Activated CD4-positive, alpha-beta memory T cell treated with anti-CD3 and anti-CD28 coated beads, Interleukin-2, amount 10 ng/mL, durations not matched to agents 7 days and 5 days (primary cell): ENCODE measurements at regions of chr4 and their contacts with region 1.

Region 1: DNA sequence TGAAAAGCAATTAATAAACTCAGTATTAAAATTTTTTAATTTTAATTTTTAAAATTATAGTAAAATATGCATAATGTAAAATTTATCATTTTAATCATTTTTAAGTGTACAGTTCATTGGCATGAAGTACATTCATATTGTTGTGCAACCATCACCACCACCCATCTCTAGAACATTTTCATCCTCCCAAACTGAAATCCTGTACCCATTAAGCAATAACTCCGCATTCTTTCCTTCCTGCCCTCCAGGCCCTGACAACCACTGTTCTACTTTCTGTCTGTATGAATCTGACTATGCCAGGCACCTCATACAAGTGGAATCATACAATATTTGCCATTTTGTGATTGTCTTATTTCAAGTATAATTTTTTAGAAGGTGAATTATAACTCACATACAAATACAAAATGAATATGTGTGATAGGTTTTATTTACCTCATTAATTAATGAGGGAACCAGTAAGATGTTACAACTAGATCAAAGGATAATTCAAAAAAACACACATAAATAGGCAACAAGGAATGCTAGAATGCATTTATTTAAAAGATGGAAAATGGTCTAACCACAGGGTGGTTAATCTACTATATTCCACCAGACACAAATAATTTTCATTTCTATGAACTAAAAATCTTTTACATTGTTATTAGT is 13.1 kb upstream of the AFF1 start:
- DNase-seq: no peak
- H3K4me3 Mint-ChIP-seq: no peak overlapping the region
- H3K27ac Mint-ChIP-seq: no peak overlapping the region
- H3K4me1 Mint-ChIP-seq: peaks cover 16% of the 10 kb centered on the region
- H3K27me3 Mint-ChIP-seq: no peaks in the 10 kb centered on the region

Region 2: GRCh38 chr4:86432552-86433134 is 489.1 kb before region 1 on chr4:
- CTCF ChIA-PET with region 1: no interaction called
- POLR2A ChIA-PET with region 1: no interaction called
- DNase-seq: no peak
- H3K4me3 Mint-ChIP-seq: no peak overlapping the region
- H3K27ac Mint-ChIP-seq: no peak overlapping the region
- H3K4me1 Mint-ChIP-seq: no peaks in the 10 kb centered on the region
- H3K27me3 Mint-ChIP-seq: no peaks in the 10 kb centered on the region

Region 3: DNA sequence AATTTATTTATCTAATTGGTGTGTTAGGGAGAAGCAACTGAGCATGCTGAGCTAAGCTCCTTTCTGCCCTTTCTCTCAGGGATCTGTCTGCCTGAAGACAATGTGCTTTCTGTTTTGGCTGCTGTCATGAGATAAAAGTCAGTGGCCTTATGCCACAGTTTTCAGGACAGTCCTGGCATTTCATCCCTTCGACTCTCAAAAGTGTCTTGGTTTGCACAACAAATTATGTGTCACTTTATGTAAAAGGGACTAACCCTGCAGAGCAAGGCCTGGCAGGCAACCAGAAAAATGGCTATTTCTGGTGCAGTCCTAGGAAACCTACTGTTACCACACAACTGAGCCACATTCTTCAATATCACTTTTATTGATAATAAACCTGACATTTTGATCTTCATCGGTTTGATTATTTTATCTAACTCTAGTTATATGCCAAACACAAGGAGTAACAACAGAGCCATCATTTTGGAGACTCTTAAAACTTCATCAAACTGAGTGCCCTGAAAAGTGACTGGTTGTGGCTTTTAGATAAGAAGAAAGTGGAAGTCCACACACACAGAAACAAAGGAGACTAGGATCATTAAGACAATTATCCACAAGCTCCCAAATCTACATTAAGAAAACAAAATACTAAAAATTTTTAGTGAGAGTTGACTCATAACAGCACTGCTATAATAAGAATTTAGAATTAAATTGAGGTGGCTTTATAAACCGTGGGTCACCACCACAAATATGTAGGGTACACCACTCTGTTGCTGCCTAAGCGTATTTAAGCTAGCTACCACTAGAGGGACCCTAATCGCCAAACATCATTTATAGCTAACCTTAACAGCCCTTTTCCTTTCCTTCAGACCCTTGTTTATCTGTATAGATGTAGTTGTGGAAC is 423.5 kb before region 1 on chr4:
- CTCF ChIA-PET with region 1: interaction called, 16 read pairs
- POLR2A ChIA-PET with region 1: no interaction called
- DNase-seq: no peak
- H3K4me3 Mint-ChIP-seq: no peak overlapping the region
- H3K27ac Mint-ChIP-seq: no peak overlapping the region
- H3K4me1 Mint-ChIP-seq: peaks cover 12% of the 10 kb centered on the region
- H3K27me3 Mint-ChIP-seq: peaks cover 16% of the 10 kb centered on the region

Region 4: GRCh38 chr4:86908251-86908657 is 13.5 kb before region 1 on chr4:
- CTCF ChIA-PET with region 1: interaction called, 16 read pairs
- POLR2A ChIA-PET with region 1: no interaction called
- DNase-seq: no peak
- H3K4me3 Mint-ChIP-seq: no peak overlapping the region
- H3K27ac Mint-ChIP-seq: no peak overlapping the region
- H3K4me1 Mint-ChIP-seq: peaks cover 14% of the 10 kb centered on the region
- H3K27me3 Mint-ChIP-seq: peaks cover 3% of the 10 kb centered on the region

Region 5: DNA sequence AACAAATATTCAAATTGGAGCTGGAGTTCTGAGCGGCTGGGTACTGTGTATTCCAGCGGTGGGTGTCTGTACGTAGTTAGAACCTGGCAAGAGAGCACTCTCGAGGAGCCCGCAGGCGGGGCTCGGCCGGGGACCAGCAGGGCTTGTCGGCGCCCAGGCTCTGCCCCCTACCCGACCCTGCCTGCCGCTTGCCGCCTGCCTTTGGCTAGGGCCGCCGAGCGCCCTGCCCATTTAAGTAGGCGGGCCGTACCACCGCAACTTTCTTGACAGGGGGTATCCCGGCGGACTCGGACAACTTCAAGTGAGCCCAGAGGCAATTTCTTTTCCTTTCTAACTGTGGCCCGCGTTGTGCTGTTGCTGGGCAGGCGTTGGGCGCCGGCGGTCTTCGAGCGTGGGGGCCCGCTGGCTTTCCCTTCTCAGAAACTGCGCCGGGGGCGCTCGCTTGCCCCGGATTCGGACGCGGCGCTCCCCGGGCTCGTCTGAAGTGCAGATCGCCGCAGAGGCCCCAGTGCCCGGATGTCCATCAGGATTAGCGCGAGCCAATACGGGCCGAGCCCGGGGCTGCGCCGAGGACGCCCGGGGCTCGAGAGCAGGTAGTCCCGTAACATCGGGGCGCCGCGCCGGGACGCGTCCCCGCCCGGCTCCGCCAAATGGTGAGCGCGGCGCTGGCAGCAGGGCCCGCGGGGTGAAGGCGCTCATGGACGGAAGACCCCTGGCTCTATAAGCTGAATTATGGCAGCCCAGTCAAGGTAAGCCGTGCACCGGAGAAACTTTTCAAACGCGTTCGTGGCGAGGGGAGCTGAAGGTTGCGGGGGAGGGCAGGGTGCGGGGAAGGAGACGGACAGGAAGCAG is 85.2 kb after region 1 on chr4:
- CTCF ChIA-PET with region 1: interaction called, 44 read pairs
- POLR2A ChIA-PET with region 1: interaction called, 25 read pairs
- DNase-seq: peak; percentile 92
- H3K4me3 Mint-ChIP-seq: peak overlapping the region; percentile 95
- H3K27ac Mint-ChIP-seq: peak overlapping the region; percentile 98
- H3K4me1 Mint-ChIP-seq: peaks cover 48% of the 10 kb centered on the region
- H3K27me3 Mint-ChIP-seq: no peaks in the 10 kb centered on the region

Region 6: GRCh38 chr4:87103691-87104187 is 182.0 kb after region 1 on chr4:
- CTCF ChIA-PET with region 1: interaction called, 20 read pairs
- POLR2A ChIA-PET with region 1: interaction called, 3 read pairs
- DNase-seq: no peak
- H3K4me3 Mint-ChIP-seq: no peak overlapping the region
- H3K27ac Mint-ChIP-seq: no peak overlapping the region
- H3K4me1 Mint-ChIP-seq: peaks cover 29% of the 10 kb centered on the region
- H3K27me3 Mint-ChIP-seq: no peaks in the 10 kb centered on the region

Region 7: GRCh38 chr4:87235020-87235671 is 313.4 kb after region 1 on chr4:
- CTCF ChIA-PET with region 1: interaction called, 22 read pairs
- POLR2A ChIA-PET with region 1: no interaction called
- DNase-seq: no peak
- H3K4me3 Mint-ChIP-seq: no peak overlapping the region
- H3K27ac Mint-ChIP-seq: no peak overlapping the region
- H3K4me1 Mint-ChIP-seq: peaks cover 3% of the 10 kb centered on the region
- H3K27me3 Mint-ChIP-seq: peaks cover 4% of the 10 kb centered on the region